ENCODE measurements at regions of chr19 and their contacts with region 1.

Region 1: DNA sequence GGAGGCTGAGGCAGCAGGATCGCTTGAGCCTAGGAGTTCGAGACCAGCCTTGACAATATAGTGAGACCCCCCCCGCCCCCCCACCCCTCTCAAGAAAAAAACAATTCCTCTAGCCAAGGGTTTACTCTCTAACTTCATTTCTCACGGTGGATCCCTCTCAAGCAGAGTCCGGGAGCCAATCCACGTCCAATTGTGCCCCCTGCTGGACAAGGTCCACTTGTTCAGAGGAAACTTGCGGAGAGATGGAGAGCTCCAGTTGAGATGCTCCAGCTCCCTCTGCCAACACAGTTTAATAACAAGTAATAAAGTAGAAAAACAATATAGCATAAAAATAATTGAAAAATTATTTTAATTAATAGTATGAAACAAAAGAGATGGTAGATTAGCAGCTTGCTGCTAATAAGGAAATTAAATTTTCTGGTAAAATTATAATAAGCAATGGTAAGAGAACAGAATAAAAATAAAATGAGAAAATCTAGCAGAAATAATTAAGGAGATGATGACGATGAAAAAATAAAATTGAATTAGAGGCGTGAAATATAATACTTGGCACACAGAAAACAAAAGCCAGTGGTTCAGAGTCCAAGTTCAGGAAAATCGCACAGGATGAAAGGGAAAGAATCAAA is 14.5 kb upstream of the SIGLEC14 start:
- DNase-seq: peak; percentile 46
- ATAC-seq: peak; percentile 34
- H3K4me3 Mint-ChIP-seq: no peak overlapping the region
- H3K27ac Mint-ChIP-seq: no peak overlapping the region
- H3K4me1 Mint-ChIP-seq: peaks cover 12% of the 10 kb centered on the region
- H3K27me3 Mint-ChIP-seq: peaks cover 18% of the 10 kb centered on the region
- CTCF ChIP-seq: no peak

Region 2: GRCh38 chr19:51158474-51159129 is 502.5 kb before region 1 on chr19:
- CTCF ChIA-PET with region 1: interaction called, 3 read pairs
- POLR2A ChIA-PET with region 1: no interaction called
- intact Hi-C with region 1: loop called (anchors 2 kb)
- DNase-seq: no peak
- ATAC-seq: peak; percentile 40
- H3K4me3 Mint-ChIP-seq: no peak overlapping the region
- H3K27ac Mint-ChIP-seq: no peak overlapping the region
- H3K4me1 Mint-ChIP-seq: no peaks in the 10 kb centered on the region
- H3K27me3 Mint-ChIP-seq: peaks cover 18% of the 10 kb centered on the region
- CTCF ChIP-seq: peak; percentile 87

Region 3: GRCh38 chr19:51441410-51442390 is 219.4 kb before region 1 on chr19:
- CTCF ChIA-PET with region 1: interaction called, 16 read pairs
- POLR2A ChIA-PET with region 1: no interaction called
- intact Hi-C with region 1: no loop called
- DNase-seq: peak; percentile 48
- ATAC-seq: peak; percentile 89
- H3K4me3 Mint-ChIP-seq: peak overlapping the region; percentile 71
- H3K27ac Mint-ChIP-seq: peak overlapping the region; percentile 77
- H3K4me1 Mint-ChIP-seq: peaks cover 30% of the 10 kb centered on the region
- H3K27me3 Mint-ChIP-seq: peaks cover 16% of the 10 kb centered on the region
- CTCF ChIP-seq: no peak

Region 4: GRCh38 chr19:51514866-51515481 is 146.1 kb before region 1 on chr19:
- CTCF ChIA-PET with region 1: interaction called, 52 read pairs
- POLR2A ChIA-PET with region 1: no interaction called
- intact Hi-C with region 1: loop called (anchors 1 kb)
- DNase-seq: no peak
- ATAC-seq: no peak
- H3K4me3 Mint-ChIP-seq: no peak overlapping the region
- H3K27ac Mint-ChIP-seq: no peak overlapping the region
- H3K4me1 Mint-ChIP-seq: peaks cover 7% of the 10 kb centered on the region
- H3K27me3 Mint-ChIP-seq: peaks cover 2% of the 10 kb centered on the region
- CTCF ChIP-seq: peak; percentile 72

Region 5: GRCh38 chr19:51637362-51637978 is 23.6 kb before region 1 on chr19:
- CTCF ChIA-PET with region 1: interaction called, 12 read pairs
- POLR2A ChIA-PET with region 1: no interaction called
- intact Hi-C with region 1: no loop called
- DNase-seq: no peak
- ATAC-seq: no peak
- H3K4me3 Mint-ChIP-seq: no peak overlapping the region
- H3K27ac Mint-ChIP-seq: no peak overlapping the region
- H3K4me1 Mint-ChIP-seq: peaks cover 25% of the 10 kb centered on the region
- H3K27me3 Mint-ChIP-seq: no peaks in the 10 kb centered on the region
- CTCF ChIP-seq: no peak